ENCODE measurements at regions of chr7 and their contacts with region 1.

Region 1: DNA sequence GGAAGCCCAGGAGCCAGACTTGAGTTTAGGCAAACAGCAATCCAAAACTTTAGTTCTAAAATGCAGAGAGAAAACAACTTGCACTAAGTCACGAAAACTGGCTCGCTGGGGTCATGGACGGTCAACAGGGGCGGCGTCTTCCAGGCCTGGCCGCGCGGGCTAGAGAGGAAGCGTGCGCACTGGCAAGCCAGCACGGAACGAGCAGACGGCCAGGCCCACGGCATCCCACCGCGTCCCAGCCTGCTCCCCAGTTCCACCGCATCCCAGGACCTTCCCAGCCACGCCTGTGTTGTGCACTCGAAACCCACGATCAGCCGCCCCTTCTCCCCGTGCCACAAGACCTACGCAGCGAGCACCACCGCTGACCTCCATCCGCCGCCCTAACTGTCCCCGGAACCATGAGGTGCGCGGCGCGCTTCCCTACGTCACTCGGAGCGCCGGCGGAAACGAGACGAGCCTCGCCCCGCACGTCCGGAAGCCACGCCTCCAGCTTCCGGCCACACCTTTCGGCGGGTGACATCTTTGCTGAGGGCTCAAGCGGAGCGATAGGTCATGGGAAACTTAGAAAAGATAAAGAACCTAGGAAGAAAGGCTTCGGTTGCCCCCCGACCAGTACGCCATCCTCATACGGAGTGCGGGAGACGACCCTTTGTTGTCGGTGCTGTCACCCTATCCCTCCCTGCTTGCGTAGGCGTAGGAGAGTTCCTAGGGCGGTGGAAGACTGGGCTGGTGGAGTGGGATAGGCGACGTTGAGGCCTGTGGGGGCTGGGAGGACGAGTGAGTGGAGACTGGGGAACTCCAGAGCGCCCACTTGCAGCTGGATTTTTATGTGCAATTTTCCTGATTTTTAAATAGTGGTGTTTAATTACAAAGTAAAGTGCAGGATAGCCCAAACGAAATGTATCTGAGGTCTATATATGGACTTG is at the start of gene TBRG4:
- DNase-seq: peak; percentile 93 to 98
- ATAC-seq: peak; percentile 95
- total RNA-seq, gene TBRG4: 80.9 to 88.7 TPM

Region 2: DNA sequence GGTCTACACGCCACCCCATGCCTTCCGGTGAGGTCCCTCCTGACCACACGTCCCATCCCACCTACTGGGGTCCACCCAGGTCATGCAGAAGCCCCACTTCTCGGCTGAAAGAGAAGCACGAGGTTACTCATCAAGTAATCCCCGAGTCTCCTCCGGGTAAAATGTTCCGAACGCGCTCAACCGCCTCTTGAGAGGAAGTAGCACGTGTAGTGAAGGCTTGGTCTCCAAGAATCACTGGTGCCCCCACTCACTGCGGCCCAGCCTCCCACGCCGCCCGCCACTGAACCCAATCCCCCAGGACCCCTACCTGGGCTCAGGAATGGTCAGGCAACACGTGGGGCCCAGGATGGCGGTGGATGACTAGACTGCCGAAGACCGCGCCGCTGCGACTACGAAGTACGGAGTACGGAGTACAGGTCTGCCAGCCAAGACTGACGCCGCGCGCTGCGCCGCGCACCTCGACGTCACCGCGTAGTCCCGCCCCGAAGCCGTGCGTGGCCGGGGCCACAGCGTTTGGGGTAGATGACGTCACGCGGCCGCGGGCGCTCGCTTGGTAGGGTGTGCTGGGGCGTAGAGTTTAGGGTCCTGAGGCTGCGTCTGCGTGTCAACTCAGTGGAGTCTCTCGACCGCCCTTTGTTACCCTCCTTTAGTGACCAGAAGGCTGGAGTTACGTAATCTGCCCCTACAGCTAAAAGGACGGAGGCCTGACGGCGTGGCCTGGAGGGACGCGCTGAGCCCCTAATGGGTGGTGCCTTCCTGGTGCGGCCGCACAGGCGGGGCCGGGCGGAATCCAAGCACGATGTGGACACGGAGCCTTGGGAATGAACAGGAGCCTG is 125.1 kb before region 1 on chr7:
- intact Hi-C with region 1: loop called in 1 of 2 experiments (anchors 10 kb)
- DNase-seq: peak; percentile 93 to 98
- ATAC-seq: peak; percentile 98

Measured in left colon (tissue), 2 donors.